Activated T-helper 1 cell treated with anti-CD3 and anti-CD28 coated beads, Interleukin-12 subunit alpha, Interleukin-12 subunit beta, Interleukin-2, Interleukin-4 antibody, amounts not matched to agents 30 ng/mL and 10 ng/mL and 1 ng/mL, durations not matched to agents 14 hours and 24 hours and 36 hours (primary cell): ENCODE measurements at regions of chr15 and their contacts with region 1.

Region 1: DNA sequence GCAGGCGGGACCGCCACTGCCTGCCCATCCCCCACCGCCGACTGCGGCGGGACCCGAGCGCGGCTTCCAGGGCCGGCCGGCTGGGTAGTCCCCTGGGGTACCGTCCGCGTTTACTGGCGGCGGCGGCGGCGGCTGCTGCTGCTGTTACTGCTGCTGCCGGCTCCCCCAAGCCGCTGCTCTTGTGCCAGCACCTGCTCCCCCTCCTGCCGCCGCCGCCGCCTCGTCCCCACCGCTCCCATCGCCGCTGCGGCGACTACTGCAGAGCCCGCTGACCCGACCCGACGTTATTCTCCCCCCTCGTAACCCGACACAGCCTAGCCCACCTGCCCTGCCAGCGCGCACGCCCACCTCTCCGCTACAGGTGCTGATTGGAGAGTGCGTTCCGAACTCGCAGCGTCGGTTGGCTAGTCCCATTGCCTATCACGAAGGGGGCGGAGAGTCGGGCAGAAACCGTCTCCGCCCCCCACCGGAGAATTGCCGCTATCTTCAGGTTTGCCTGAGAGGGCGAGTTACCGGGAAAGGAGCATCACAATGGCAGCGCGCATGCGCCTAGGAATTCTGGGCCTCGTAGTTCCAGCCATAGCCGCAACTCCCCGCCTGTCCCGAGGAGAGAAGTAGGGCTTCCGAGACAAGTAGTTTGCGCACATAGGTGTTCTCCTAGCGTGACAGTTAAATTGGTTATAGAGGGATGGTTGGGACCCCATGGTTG is at the start of gene TTBK2:
- DNase-seq: peak; percentile 96
- H3K4me3 Mint-ChIP-seq: peak within 1 kb of the TSS; percentile 98
- H3K27ac Mint-ChIP-seq: peak within 1 kb of the TSS; percentile 94
- H3K4me1 Mint-ChIP-seq: peaks cover 37% of the 10 kb centered on the region
- H3K27me3 Mint-ChIP-seq: no peaks in the 10 kb centered on the region
- total RNA-seq, gene TTBK2: 11.4 and 13.4 TPM in 2 replicates

Region 2: GRCh38 chr15:41972253-41973242 is 948.1 kb before region 1 on chr15 and contains the start of gene EHD4:
- intact Hi-C with region 1: loop called (anchors 5 kb)
- DNase-seq: peak; percentile 95
- H3K4me3 Mint-ChIP-seq: peak within 1 kb of the TSS; percentile 91
- H3K27ac Mint-ChIP-seq: peak within 1 kb of the TSS; percentile 91
- H3K4me1 Mint-ChIP-seq: peaks cover 60% of the 10 kb centered on the region
- H3K27me3 Mint-ChIP-seq: peaks cover 7% of the 10 kb centered on the region
- total RNA-seq, gene EHD4: 29.5 and 30.1 TPM in 2 replicates

Region 3: DNA sequence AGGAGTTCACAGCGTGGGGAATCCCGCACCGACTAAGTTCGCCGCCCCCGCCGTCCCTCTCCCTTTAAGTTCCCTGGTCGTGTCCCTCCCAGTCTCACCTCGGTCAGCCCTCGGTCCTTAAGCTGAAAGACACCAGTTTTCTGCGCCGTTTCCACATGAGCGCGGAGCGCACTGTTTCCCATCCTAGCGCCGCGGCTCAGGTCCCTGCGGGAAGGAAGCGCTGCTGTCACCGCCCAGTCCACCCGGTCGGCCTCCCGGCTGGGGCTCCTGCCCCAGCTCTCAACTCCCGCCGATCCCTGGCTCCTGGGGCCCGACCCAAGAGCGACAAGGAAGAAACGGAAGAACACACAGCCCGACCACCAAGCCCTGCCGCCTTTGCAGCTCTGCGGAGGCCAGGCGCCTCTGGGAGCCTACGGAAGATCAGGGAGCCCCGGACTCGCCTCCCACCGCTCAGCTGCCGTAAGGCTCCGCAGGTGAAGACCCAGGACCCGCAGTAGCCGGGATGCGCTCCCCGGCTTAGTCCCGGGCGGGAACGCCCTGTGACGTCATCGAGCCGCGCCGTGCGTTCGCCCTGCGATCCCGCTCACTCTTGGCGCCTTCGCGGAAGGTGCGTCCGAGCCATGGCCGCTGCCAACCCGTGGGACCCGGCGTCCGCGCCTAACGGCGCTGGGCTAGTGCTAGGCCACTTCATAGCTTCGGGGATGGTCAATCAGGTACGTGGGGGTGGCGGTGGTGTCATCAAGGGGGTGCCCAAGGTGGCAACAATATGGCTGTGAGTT is 372.2 kb before region 1 on chr15 and contains the starts of genes HAUS2 and LRRC57:
- intact Hi-C with region 1: loop called (anchors 1 kb)
- DNase-seq: peak; percentile 86
- H3K4me3 Mint-ChIP-seq: peak within 1 kb of the TSS; percentile 96
- H3K27ac Mint-ChIP-seq: peak within 1 kb of the TSS; percentile 94
- H3K4me1 Mint-ChIP-seq: peaks cover 50% of the 10 kb centered on the region
- H3K27me3 Mint-ChIP-seq: no peaks in the 10 kb centered on the region
- total RNA-seq, gene HAUS2: 43.2 and 46.7 TPM in 2 replicates
- total RNA-seq, gene LRRC57: 19.9 TPM in 2 replicates

Region 4: DNA sequence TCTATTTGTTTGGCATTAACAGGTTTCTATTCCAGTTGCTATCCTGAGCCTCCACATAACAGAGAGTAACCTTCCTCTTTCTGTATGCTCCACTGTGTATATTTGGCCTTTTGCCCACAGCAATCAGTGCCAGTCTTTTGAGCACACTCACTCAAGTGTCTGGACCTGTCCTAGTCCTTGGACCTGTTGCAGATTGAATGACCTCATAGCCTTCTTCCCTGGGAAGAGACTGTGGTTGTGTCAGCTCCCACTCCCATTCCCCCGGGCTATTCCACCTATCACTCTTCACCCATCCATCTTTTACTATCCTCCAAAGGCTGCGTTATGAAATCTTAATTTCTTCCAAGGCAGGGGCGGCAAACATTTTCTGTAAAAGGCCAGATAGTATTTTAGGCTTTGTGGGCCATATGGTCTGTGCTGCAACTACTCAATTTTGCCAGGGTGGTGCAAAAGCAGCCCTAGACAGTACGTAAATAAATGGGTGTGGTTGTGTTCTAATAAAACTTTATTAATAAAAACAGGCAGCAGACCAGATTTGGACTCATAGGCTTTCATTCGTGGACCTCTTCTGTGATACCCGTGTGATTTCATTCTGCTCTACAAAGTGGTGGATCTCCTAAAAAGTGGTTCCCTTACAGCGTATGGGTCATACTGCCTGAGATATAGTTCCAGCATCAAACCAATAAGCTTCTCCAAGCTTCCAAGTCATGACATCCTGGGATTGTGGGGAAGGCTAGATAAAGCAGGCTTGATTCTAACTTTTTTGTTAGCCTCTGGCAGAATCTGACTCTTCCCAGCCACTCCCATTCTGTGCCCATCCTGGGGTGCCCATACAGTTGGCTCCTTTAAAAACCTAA is 241.2 kb before region 1 on chr15:
- intact Hi-C with region 1: loop called (anchors 1 kb)
- DNase-seq: no peak
- H3K4me3 Mint-ChIP-seq: no peak overlapping the region
- H3K27ac Mint-ChIP-seq: no peak overlapping the region
- H3K4me1 Mint-ChIP-seq: peaks cover 26% of the 10 kb centered on the region
- H3K27me3 Mint-ChIP-seq: no peaks in the 10 kb centered on the region

Region 5: DNA sequence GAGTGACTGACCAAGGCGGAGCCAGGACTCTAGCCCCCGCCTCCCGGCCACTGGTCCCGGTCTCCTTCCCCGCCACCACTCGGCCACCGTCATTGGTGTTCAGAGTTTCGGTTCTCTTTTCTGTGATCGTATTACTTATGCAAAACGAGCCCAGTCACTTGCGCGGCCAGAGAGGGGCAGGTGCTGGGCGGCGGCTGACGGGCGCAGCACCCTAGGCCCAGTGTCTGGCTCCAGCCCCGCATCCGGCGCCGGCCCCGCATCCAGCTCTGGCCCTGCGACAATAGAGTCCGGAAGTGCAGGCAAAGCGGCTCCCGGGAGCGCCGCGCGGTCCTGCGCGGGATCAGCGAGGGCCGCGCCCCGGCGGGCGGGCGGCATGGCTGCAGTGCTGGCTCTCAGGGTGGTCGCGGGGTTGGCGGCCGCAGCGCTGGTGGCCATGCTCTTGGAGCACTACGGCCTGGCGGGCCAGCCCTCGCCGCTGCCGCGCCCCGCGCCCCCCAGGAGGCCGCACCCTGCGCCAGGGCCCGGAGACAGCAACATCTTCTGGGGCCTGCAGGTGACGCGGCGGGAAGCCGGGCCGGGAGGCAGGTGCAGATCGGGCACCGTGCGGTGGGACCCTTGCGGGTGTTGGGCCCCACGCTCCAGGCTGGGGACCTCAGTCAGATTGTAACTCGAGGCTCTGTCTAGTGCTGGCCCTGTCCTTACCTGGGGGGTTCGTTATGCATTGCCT is 212.9 kb after region 1 on chr15 and contains the start of gene TMEM62:
- intact Hi-C with region 1: loop called (anchors 5 kb)
- DNase-seq: peak; percentile 67
- H3K4me3 Mint-ChIP-seq: peak within 1 kb of the TSS; percentile 96
- H3K27ac Mint-ChIP-seq: peak within 1 kb of the TSS; percentile 90
- H3K4me1 Mint-ChIP-seq: peaks cover 33% of the 10 kb centered on the region
- H3K27me3 Mint-ChIP-seq: peaks cover 9% of the 10 kb centered on the region
- total RNA-seq, gene TMEM62: 16.4 and 18.6 TPM in 2 replicates